ENCODE measurements at regions of chr14 and their contacts with region 1.

Region 1: DNA sequence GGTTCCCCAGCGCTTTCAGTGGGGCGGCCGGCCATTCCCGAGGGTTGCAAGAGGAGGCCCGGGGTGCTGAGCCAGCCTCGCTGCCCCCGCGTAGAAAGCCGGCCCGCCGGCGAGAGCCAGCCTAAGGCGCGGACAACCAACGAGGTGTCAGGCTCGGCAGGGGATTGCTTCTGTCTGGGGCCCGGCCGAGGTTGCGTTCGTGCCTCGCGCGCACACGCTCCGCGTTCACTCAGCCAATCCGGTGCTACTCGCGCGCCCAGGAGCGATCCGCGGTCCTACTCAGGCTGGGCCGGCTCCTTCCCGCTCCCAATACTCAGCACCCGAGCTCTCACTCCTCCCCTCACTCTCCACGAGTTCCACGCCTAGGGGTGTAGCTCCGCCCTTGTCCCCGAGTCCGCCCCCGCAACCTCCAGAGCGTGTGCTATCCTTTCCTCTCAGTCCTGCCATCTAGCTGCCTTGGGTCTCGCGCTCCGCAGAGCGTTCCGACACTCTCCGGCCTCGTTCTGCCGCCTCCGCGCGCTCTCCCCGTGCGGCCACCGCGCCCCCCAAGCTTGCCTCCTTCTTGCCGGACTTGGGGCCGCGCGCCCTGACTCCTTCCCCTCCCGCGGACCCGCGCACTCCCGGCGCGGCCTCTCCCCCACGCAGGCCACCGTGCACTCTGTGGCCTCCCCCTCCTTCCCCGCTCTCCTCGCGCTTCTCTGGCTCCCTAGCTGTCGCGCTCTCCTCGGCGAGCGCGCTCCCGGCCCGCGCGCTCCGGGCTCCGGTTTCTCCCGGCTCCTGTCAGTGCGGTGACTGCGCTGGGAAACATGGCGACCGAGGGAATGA is at the start of gene GPHN:
- DNase-seq: peak; percentile 90
- H3K4me3 Mint-ChIP-seq: peak within 1 kb of the TSS; percentile 93
- H3K27ac Mint-ChIP-seq: peak within 1 kb of the TSS; percentile 96
- H3K4me1 Mint-ChIP-seq: peaks cover 36% of the 10 kb centered on the region
- H3K27me3 Mint-ChIP-seq: peaks cover 22% of the 10 kb centered on the region
- total RNA-seq, gene GPHN: 38.5 and 43.5 TPM in 2 replicates

Region 2: DNA sequence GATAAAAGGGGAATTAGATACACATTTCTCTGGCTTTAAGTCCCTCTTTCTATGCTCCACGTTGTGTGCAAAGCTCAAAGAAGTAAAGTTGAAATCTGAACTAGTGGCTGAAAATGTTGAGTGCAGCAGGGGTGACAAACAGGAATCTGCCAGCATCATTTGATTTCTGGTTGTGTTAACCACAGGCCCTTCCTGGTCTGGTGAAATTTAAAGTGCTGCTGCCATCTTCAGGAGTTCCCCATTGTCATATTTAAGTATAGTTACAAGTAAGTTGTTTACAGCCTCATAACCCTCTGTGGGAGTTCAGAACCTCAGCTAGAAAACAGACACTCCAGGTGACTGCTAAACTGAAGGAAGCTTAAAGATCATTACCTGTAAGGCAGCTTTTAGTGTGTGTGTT is 112.6 kb before region 1 on chr14:
- intact Hi-C with region 1: loop called (anchors 1 kb)
- DNase-seq: peak; percentile 34
- H3K4me3 Mint-ChIP-seq: peak overlapping the region; percentile 41
- H3K27ac Mint-ChIP-seq: peak overlapping the region; percentile 47
- H3K4me1 Mint-ChIP-seq: peaks cover 13% of the 10 kb centered on the region
- H3K27me3 Mint-ChIP-seq: peaks cover 11% of the 10 kb centered on the region

Region 3: DNA sequence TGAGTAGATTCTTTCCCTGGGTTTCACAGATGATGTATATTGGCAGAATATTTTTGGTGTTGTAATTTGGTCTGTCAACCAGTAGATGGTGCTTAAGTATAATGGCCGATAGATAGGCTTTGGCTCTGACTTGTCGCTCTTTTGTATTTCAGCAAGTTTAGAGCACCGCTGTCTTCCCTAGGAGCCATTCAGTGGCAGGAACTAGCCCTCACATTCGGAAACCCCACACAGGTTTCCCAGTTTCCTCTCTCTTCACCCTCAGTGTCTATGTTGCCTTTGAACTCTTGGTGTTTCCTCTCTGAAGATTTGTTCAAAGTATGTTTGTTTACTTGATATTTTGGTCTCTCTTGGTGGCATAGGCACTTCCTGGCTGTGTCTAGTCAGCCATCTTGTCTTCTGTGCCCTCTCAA is 102.2 kb after region 1 on chr14:
- intact Hi-C with region 1: loop called (anchors 5 kb)
- DNase-seq: no peak
- H3K4me3 Mint-ChIP-seq: no peak overlapping the region
- H3K27ac Mint-ChIP-seq: peak overlapping the region; percentile 29
- H3K4me1 Mint-ChIP-seq: peaks cover 21% of the 10 kb centered on the region
- H3K27me3 Mint-ChIP-seq: peaks cover 5% of the 10 kb centered on the region

Region 4: GRCh38 chr14:66771234-66771633 is 263.3 kb after region 1 on chr14:
- intact Hi-C with region 1: no loop called
- DNase-seq: no peak
- H3K4me3 Mint-ChIP-seq: no peak overlapping the region
- H3K27ac Mint-ChIP-seq: no peak overlapping the region
- H3K4me1 Mint-ChIP-seq: no peaks in the 10 kb centered on the region
- H3K27me3 Mint-ChIP-seq: no peaks in the 10 kb centered on the region

Region 5: GRCh38 chr14:67137744-67138371 is 629.9 kb after region 1 on chr14:
- intact Hi-C with region 1: loop called (anchors 5 kb)
- DNase-seq: no peak
- H3K4me3 Mint-ChIP-seq: no peak overlapping the region
- H3K27ac Mint-ChIP-seq: no peak overlapping the region
- H3K4me1 Mint-ChIP-seq: peaks cover 12% of the 10 kb centered on the region
- H3K27me3 Mint-ChIP-seq: no peaks in the 10 kb centered on the region

Region 6: DNA sequence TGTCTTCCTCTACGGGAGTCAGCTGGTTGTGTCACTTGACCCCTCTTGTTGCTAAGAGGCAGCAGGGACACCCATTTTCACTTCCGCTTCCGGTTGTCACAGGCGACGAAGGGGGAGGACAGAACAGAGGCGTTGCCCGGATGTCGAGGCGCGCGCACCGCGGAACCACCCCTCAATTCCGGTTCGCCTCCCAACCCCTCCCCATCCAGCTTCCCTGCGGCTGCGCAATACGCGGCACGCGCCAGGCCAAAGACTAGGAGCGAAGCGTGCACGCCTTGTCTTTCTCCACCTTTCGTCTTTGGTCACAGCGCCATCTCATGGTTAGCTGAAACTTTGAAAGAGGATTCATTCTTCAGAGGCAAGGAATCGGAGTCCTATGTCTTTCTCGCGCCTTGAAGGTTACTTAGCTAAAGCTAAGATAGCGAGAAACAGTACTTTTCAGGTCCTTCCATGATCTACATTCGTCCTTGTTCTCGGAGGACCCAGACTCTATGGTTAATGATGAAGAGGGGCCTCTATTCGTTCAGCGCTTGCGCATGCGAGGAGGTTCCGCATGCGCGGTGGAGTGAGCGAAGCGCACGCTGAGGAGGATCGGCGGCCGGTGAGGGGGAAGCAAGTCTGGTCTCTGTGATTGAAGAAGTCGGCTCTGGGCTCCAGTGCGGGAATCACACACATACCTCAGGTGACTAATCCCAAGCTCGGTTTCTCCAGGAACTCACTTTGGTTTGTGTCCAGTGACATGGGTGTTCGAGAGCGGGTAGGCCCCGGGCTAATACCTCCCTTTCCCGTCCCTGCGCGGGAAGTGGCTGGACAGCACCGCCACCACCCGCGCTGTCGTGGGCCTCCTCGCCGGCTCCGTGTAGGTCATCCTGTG is 852.1 kb after region 1 on chr14 and contains the starts of genes ATP6V1D and EIF2S1:
- intact Hi-C with region 1: loop called (anchors 1 kb)
- DNase-seq: peak; percentile 100
- H3K4me3 Mint-ChIP-seq: peak within 1 kb of the TSS; percentile 92
- H3K27ac Mint-ChIP-seq: peak within 1 kb of the TSS; percentile 97
- H3K4me1 Mint-ChIP-seq: peaks cover 81% of the 10 kb centered on the region
- H3K27me3 Mint-ChIP-seq: no peaks in the 10 kb centered on the region
- total RNA-seq, gene ATP6V1D: 29.1 and 30.8 TPM in 2 replicates
- total RNA-seq, gene EIF2S1: 234 and 245 TPM in 2 replicates

Measured in activated T-helper 1 cell treated with anti-CD3 and anti-CD28 coated beads, Interleukin-12 subunit alpha, Interleukin-12 subunit beta, Interleukin-2, Interleukin-4 antibody, amounts not matched to agents 30 ng/mL and 10 ng/mL and 1 ng/mL, durations not matched to agents 14 hours and 24 hours and 36 hours (primary cell).